ENCODE measurements at regions of chr4 and their contacts with region 1.

Region 1: GRCh38 chr4:26473893-26474292 is 16.4 kb downstream of the CCKAR start:
- DNase-seq: no peak
- CTCF ChIP-seq: no peak

Region 2: DNA sequence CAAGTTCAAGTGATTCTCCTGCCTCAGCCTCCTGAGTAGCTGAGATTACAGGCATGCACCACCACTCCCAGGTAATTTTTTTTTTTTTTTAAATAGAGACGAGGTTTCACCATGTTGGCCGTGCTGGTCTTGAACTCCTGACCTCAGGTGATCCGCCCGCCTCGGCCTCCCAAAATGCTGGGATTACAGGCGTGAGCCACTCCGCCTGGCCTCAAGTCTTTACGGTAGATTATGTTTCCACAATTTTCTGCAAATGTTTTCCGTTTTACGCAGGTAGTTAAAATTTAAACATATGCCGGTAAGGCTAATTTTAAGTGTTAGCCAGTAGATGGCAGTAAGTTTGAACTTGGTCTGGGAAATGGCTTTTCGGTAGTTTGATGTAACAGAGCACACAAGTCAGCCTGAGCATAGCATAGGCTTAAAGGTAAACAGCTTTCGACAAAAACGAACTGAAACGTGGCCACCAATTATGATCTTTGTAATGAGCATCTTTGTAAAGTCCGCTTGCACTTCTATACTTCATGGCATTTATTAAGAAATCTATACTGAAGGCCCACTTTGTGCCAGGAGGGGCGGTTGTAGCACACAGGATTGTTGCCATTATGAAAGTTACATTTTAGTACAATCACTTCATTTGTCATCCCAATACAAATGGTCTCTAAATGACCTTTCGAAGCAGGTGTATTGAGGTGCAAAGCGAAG is 14.7 kb before region 1 on chr4:
- CTCF ChIA-PET with region 1: interaction called, 10 read pairs
- POLR2A ChIA-PET with region 1: no interaction called
- DNase-seq: peak; percentile 65
- CTCF ChIP-seq: peak; percentile 55

Region 3: GRCh38 chr4:26484032-26484515 is 10.2 kb after region 1 on chr4:
- CTCF ChIA-PET with region 1: interaction called, 19 read pairs
- POLR2A ChIA-PET with region 1: no interaction called
- DNase-seq: no peak
- CTCF ChIP-seq: no peak

Region 4: GRCh38 chr4:26496207-26496783 is 22.4 kb after region 1 on chr4:
- CTCF ChIA-PET with region 1: no interaction called
- POLR2A ChIA-PET with region 1: no interaction called
- DNase-seq: no peak
- CTCF ChIP-seq: no peak

Region 5: DNA sequence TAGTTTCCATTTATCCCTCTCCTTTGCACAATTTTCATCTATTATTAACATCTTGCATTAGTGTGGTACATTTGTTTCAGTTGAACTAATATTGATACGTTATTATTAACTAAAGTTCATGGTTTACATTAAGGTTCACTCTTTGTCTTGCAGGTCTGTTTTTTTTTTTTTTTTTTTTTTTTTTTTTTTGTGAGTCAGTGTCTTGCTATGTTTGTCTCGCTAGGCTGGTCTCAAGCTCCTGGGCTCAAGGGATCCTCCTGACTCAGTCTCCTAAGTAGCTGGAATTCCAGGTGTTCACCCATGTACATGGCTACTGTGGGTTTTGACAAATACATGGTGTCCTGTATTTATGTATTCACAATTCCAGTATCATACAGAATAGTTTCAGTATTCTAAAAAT is 116.7 kb after region 1 on chr4:
- CTCF ChIA-PET with region 1: no interaction called
- POLR2A ChIA-PET with region 1: no interaction called
- DNase-seq: no peak
- CTCF ChIP-seq: no peak

Measured in GM10248 (cell line).